Naive thymus-derived CD8-positive, alpha-beta T cell (primary cell): ENCODE measurements at regions of chr1 and their contacts with region 1.

Region 1: GRCh38 chr1:156282479-156283222 is at the start of gene SMG5:
- DNase-seq: peak; percentile 91 to 98 (median 96)
- ATAC-seq: peak; percentile 94 to 95
- H3K4me3 Mint-ChIP-seq: peak within 1 kb of the TSS; percentile 93 to 100 (median 97)
- H3K27ac Mint-ChIP-seq: peak within 1 kb of the TSS; percentile 92 to 98 (median 96)
- H3K4me1 Mint-ChIP-seq: peaks cover 28 to 50% (median 47%) of the 10 kb centered on the region in 4 donors
- H3K27me3 Mint-ChIP-seq: no peaks in the 10 kb centered on the region
- polyA plus RNA-seq, gene SMG5: 9.5 to 28.4 (median 11.1) TPM

Region 2: GRCh38 chr1:156295391-156295947 is 12.8 kb after region 1 on chr1 and contains the start of gene GLMP:
- POLR2A ChIA-PET with region 1: interaction called, 21 read pairs
- DNase-seq: peak; percentile 37 to 77 (median 50)
- ATAC-seq: peak; percentile 95 to 96
- H3K4me3 Mint-ChIP-seq: peak within 1 kb of the TSS; percentile 86 to 93 (median 90)
- H3K27ac Mint-ChIP-seq: peak within 1 kb of the TSS; percentile 52 to 93 (median 84)
- H3K4me1 Mint-ChIP-seq: peaks cover 14 to 23% (median 19%) of the 10 kb centered on the region in 4 donors
- H3K27me3 Mint-ChIP-seq: no peaks in the 10 kb centered on the region
- polyA plus RNA-seq, gene GLMP: 12.1 to 22.2 (median 17.3) TPM

Region 3: DNA sequence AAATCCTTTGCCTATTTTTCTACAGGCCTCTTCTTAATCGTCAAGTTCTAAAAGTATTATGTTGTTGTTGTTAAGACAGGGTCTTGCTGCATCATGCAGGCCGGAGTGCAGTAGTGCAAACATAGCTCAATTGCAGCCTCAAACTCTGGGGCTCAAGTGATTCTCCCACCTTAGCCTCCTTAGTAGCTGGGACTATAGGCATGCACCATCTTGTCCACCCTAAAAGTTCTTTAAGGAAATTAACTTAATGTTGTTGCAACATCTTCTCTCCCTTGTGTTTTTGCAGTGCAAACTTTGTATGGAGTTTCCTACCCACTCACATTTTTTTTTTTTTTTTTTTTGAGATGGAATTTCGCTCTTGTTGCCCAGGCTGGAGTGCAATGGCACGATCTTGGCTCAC is 20.6 kb after region 1 on chr1:
- POLR2A ChIA-PET with region 1: interaction called, 10 read pairs
- DNase-seq: no peak
- ATAC-seq: no peak
- H3K4me3 Mint-ChIP-seq: no peak overlapping the region
- H3K27ac Mint-ChIP-seq: peak overlapping the region in 3 of 10 donors; percentile 42 to 85 (median 78)
- H3K4me1 Mint-ChIP-seq: peaks cover 0 to 3% (median 1%) of the 10 kb centered on the region in 4 donors
- H3K27me3 Mint-ChIP-seq: no peaks in the 10 kb centered on the region